Activated CD8-positive, alpha-beta T cell treated with anti-CD3 and anti-CD28 coated beads, Interleukin-2, amount 10 ng/mL, durations not matched to agents 7 days and 5 days (primary cell): ENCODE measurements at regions of chr6 and their contacts with region 1.

Region 1: GRCh38 chr6:399785-400534 is 8.4 kb downstream of the IRF4 start:
- DNase-seq: peak; percentile 56
- ATAC-seq: peak; percentile 32
- H3K4me3 Mint-ChIP-seq: peak overlapping the region; percentile 46
- H3K27ac Mint-ChIP-seq: peak overlapping the region; percentile 78
- H3K4me1 Mint-ChIP-seq: peaks cover 93% of the 10 kb centered on the region
- H3K27me3 Mint-ChIP-seq: no peaks in the 10 kb centered on the region

Region 2: GRCh38 chr6:414447-414846 is 14.5 kb after region 1 on chr6:
- CTCF ChIA-PET with region 1: interaction called, 19 read pairs
- POLR2A ChIA-PET with region 1: interaction called, 231 read pairs
- DNase-seq: no peak
- ATAC-seq: peak; percentile 34
- H3K4me3 Mint-ChIP-seq: no peak overlapping the region
- H3K27ac Mint-ChIP-seq: no peak overlapping the region
- H3K4me1 Mint-ChIP-seq: peaks cover 15% of the 10 kb centered on the region
- H3K27me3 Mint-ChIP-seq: no peaks in the 10 kb centered on the region

Region 3: DNA sequence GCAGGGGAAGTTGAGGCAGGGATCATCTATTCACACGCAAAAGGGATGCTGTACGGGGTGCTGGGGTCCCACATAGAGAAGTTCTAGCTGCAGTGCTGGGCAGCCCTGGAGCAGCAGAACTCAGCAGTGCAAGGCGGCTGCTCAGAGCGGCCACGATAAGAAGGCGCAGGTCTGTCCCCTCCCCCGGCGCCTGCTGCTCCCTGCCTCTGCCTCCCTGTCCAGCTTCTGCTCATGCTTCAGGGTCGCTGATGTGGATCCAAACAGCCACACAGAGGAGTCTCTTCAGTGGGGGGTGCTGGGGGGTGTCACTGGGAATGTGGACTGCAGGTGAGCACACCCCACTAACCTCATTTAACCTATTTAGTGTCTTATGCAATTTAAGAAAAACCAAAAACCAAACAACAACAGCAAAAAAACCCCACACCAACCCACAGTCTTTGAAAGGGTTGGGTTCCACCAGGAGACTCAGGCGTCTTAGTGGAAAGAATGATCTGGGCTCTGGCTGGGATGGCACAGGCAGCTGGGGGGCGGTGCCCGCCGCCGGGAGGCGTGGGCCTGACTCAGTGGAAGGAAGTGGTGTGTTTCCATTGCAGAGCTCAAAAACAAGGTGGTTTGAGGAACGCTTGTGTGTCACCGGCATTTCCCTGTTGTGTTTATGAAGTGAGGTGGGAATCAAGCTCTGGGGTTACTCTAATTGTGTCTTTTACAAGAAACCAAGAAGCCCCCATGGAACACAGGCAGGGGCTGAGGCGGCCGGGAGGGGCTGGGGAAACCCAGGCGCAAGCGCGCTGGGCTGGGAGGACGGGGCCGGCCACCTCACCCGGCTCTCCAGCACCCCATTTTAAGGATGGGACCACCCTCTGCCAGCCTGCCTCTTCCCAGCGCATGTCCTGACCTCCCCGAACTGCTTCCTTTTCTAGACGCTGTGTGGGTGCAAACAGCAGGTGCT is 46.7 kb after region 1 on chr6:
- CTCF ChIA-PET with region 1: interaction called, 6 read pairs
- POLR2A ChIA-PET with region 1: interaction called, 70 read pairs
- DNase-seq: peak; percentile 89
- ATAC-seq: peak; percentile 83
- H3K4me3 Mint-ChIP-seq: peak overlapping the region; percentile 52
- H3K27ac Mint-ChIP-seq: peak overlapping the region; percentile 93
- H3K4me1 Mint-ChIP-seq: peaks cover 55% of the 10 kb centered on the region
- H3K27me3 Mint-ChIP-seq: no peaks in the 10 kb centered on the region

Region 4: GRCh38 chr6:490251-491037 is 90.5 kb after region 1 on chr6:
- CTCF ChIA-PET with region 1: interaction called, 4 read pairs
- POLR2A ChIA-PET with region 1: interaction called, 13 read pairs
- DNase-seq: peak; percentile 38
- ATAC-seq: peak; percentile 58
- H3K4me3 Mint-ChIP-seq: peak overlapping the region; percentile 64
- H3K27ac Mint-ChIP-seq: peak overlapping the region; percentile 93
- H3K4me1 Mint-ChIP-seq: peaks cover 76% of the 10 kb centered on the region
- H3K27me3 Mint-ChIP-seq: no peaks in the 10 kb centered on the region

Region 5: DNA sequence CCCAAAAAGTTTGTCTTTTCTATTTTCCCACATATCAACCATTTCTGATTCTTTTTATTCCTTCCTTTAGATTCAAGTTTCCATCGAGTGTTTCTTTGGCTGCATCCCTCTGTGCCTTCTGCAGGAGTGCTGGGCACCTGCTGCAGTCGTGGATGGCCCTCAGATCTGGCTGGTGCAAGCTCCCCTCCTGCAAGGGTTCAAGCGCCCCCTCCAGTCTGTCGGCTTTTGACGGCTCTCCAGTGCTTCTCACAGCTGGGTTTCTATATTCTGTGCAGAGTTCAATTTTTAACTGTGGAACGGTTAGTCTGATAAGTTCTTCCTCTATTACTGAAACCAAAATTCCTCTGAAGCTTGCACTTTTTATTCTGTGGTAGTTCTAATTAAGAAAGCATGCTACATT is 124.8 kb after region 1 on chr6:
- CTCF ChIA-PET with region 1: interaction called, 19 read pairs
- POLR2A ChIA-PET with region 1: interaction called, 5 read pairs
- DNase-seq: peak; percentile 65
- ATAC-seq: peak; percentile 60
- H3K4me3 Mint-ChIP-seq: no peak overlapping the region
- H3K27ac Mint-ChIP-seq: no peak overlapping the region
- H3K4me1 Mint-ChIP-seq: peaks cover 6% of the 10 kb centered on the region
- H3K27me3 Mint-ChIP-seq: no peaks in the 10 kb centered on the region